ENCODE measurements at regions of chr12 and their contacts with region 1.

Region 1: GRCh38 chr12:26017484-26018206 is 59.2 kb downstream of the RASSF8 start:
- DNase-seq: peak in 1 of 5 donors; percentile 49
- H3K4me3 ChIP-seq: peak overlapping the region in 2 of 3 donors; percentile 13 to 26
- H3K27ac ChIP-seq: no peak overlapping the region
- H3K4me1 ChIP-seq: peaks cover 0 to 5% (median 3%) of the 10 kb centered on the region in 3 donors
- H3K27me3 ChIP-seq: no peaks in the 10 kb centered on the region
- CTCF ChIP-seq: peak; percentile 45

Region 2: DNA sequence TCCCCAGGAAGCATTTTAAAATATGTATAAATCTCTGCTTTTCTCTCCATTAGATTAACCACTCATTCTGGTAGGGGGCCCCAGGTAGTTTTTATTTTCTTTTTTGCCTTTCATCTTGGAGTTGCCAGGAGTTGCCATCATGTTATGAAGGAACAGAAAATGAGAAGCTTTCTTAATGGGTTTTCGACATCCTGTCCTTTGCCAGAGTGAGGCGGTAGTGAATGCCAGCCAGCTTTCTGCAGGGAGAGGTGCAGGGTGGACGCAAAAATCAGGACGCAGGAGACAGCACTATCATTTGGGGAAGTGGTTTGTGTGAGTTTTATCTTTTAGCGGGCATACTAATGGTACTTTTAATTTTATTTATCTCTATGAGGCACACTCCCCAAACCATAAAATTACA is 57.5 kb before region 1 on chr12:
- intact Hi-C with region 1: loop called (anchors 10 kb)
- DNase-seq: peak in 2 of 5 donors; percentile 32 to 56
- H3K4me3 ChIP-seq: peak overlapping the region; percentile 68 to 78 (median 78)
- H3K27ac ChIP-seq: peak overlapping the region in 1 of 2 donors; percentile 21
- H3K4me1 ChIP-seq: peaks cover 0 to 2% (median 0%) of the 10 kb centered on the region in 3 donors
- H3K27me3 ChIP-seq: no peaks in the 10 kb centered on the region
- CTCF ChIP-seq: peak; percentile 10

Measured in kidney (tissue), 22 donors.